ENCODE measurements at regions of chr1 and their contacts with region 1.

Region 1: GRCh38 chr1:172609528-172609927 is 49.4 kb upstream of the FASLG start:
- DNase-seq: peak in 2 of 5 donors; percentile 21 to 26
- H3K4me3 ChIP-seq: no peak overlapping the region
- H3K4me3 Mint-ChIP-seq: no peak overlapping the region
- H3K27ac ChIP-seq: no peak overlapping the region
- H3K27ac Mint-ChIP-seq: peak overlapping the region in 4 of 8 donors; percentile 2 to 67 (median 12)
- H3K4me1 ChIP-seq: no peaks in the 10 kb centered on the region
- H3K4me1 Mint-ChIP-seq: peaks cover 4 to 7% (median 6%) of the 10 kb centered on the region in 3 donors
- H3K27me3 ChIP-seq: no peaks in the 10 kb centered on the region
- H3K27me3 Mint-ChIP-seq: no peaks in the 10 kb centered on the region

Region 2: DNA sequence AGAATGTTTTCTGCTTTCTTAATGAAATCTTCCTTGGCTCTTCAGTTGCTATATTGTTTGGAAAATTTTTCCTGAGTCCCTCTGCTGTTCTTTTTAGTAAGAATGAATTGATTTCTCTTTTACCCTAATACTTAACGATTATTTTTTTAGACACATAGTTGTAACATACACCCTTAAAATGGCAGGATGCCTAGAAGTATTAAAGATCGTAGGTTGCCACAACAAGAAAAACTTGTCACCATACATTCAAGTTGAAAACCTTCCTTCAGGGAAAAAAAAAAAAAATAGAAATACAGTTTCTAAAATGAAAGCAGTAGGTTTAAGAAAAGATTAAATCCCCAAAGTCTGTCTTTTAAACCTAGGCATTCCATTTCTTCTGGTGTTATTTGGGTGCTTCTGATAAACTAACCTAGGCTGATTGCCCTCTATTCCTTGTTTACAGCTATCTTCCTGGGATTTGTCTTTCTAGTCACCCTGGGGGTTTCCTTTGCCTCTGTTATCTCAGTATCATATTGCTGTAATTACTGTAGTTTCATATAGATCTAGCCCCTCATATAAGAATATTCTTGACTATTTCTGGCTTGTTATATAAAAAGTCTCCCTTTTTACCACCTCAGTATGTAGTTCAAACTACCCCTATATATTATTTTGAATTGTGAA is 59.8 kb before region 1 on chr1:
- CTCF ChIA-PET with region 1: no interaction called
- POLR2A ChIA-PET with region 1: no interaction called
- DNase-seq: no peak
- H3K4me3 ChIP-seq: no peak overlapping the region
- H3K4me3 Mint-ChIP-seq: peak overlapping the region in 2 of 7 donors; percentile 27 to 38
- H3K27ac ChIP-seq: no peak overlapping the region
- H3K27ac Mint-ChIP-seq: peak overlapping the region in 2 of 8 donors; percentile 5 to 35
- H3K4me1 ChIP-seq: peaks cover 27% of the 10 kb centered on the region
- H3K4me1 Mint-ChIP-seq: peaks cover 39 to 70% (median 47%) of the 10 kb centered on the region in 3 donors
- H3K27me3 ChIP-seq: no peaks in the 10 kb centered on the region
- H3K27me3 Mint-ChIP-seq: no peaks in the 10 kb centered on the region

Region 3: GRCh38 chr1:172727956-172728603 is 118.6 kb after region 1 on chr1:
- CTCF ChIA-PET with region 1: interaction called, 12 read pairs
- POLR2A ChIA-PET with region 1: no interaction called
- DNase-seq: peak in 4 of 5 donors; percentile 26 to 57 (median 40)
- H3K4me3 ChIP-seq: no peak overlapping the region
- H3K4me3 Mint-ChIP-seq: no peak overlapping the region
- H3K27ac ChIP-seq: no peak overlapping the region
- H3K27ac Mint-ChIP-seq: peak overlapping the region in 2 of 8 donors; percentile 3 to 27
- H3K4me1 ChIP-seq: no peaks in the 10 kb centered on the region
- H3K4me1 Mint-ChIP-seq: peaks cover 24 to 45% (median 29%) of the 10 kb centered on the region in 3 donors
- H3K27me3 ChIP-seq: no peaks in the 10 kb centered on the region
- H3K27me3 Mint-ChIP-seq: peaks cover 0 to 3% of the 10 kb centered on the region in 2 donors

Region 4: DNA sequence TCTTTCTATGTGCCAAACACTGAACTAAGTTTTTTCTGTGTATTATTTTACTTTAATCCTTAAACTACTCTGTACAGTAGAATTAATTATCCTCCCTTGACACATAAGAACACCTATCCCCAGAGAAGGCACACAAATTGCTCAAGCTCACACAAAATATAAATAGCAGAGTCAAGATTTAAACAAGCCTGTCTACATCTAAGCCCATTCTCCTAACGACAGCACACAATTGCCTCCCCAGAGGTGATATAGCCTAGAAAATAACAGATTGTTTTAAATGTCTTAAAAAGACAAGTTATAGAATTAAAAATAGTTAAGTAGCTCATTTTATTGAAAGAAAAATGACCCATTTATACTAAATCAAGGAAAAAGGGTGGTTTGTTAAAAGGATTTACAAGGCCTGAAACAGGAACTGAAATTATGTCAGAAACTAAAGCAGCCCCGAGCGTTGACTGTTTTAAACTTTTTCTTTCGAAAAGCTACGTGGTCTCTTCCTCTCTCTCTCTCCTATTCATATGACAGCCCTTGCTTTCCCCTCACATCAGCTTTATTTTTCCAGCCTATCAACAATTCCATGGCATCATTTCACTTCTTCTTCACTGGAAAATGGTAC is 410.7 kb after region 1 on chr1:
- CTCF ChIA-PET with region 1: no interaction called
- POLR2A ChIA-PET with region 1: no interaction called
- DNase-seq: no peak
- H3K4me3 ChIP-seq: no peak overlapping the region
- H3K4me3 Mint-ChIP-seq: no peak overlapping the region
- H3K27ac ChIP-seq: no peak overlapping the region
- H3K27ac Mint-ChIP-seq: peak overlapping the region in 1 of 8 donors; percentile 2
- H3K4me1 ChIP-seq: no peaks in the 10 kb centered on the region
- H3K4me1 Mint-ChIP-seq: peaks cover 4 to 9% (median 8%) of the 10 kb centered on the region in 3 donors
- H3K27me3 ChIP-seq: no peaks in the 10 kb centered on the region
- H3K27me3 Mint-ChIP-seq: no peaks in the 10 kb centered on the region